ENCODE measurements at regions of chr7 and their contacts with region 1.

Region 1: GRCh38 chr7:15561835-15562234 is at the start of gene AGMO:
- DNase-seq: peak; percentile 87
- H3K4me3 Mint-ChIP-seq: peak within 1 kb of the TSS; percentile 69
- H3K27ac Mint-ChIP-seq: peak within 1 kb of the TSS; percentile 55
- H3K4me1 Mint-ChIP-seq: peaks cover 38% of the 10 kb centered on the region
- H3K27me3 Mint-ChIP-seq: no peaks in the 10 kb centered on the region
- CTCF ChIP-seq: no peak
- total RNA-seq, gene AGMO: 13.2 and 13.9 TPM in 2 replicates

Region 2: GRCh38 chr7:15352421-15353206 is 209.2 kb before region 1 on chr7:
- CTCF ChIA-PET with region 1: interaction called, 10 read pairs
- intact Hi-C with region 1: no loop called
- DNase-seq: no peak
- H3K4me3 Mint-ChIP-seq: no peak overlapping the region
- H3K27ac Mint-ChIP-seq: no peak overlapping the region
- H3K4me1 Mint-ChIP-seq: no peaks in the 10 kb centered on the region
- H3K27me3 Mint-ChIP-seq: no peaks in the 10 kb centered on the region
- CTCF ChIP-seq: no peak

Region 3: GRCh38 chr7:15607529-15608210 is 45.8 kb after region 1 on chr7:
- CTCF ChIA-PET with region 1: interaction called, 5 read pairs
- intact Hi-C with region 1: loop called (anchors 5 kb)
- DNase-seq: no peak
- H3K4me3 Mint-ChIP-seq: no peak overlapping the region
- H3K27ac Mint-ChIP-seq: no peak overlapping the region
- H3K4me1 Mint-ChIP-seq: no peaks in the 10 kb centered on the region
- H3K27me3 Mint-ChIP-seq: no peaks in the 10 kb centered on the region
- CTCF ChIP-seq: no peak

Region 4: GRCh38 chr7:15680446-15680845 is 118.6 kb after region 1 on chr7:
- CTCF ChIA-PET with region 1: interaction called, 32 read pairs
- intact Hi-C with region 1: loop called (anchors 2 kb)
- DNase-seq: no peak
- H3K4me3 Mint-ChIP-seq: peak overlapping the region; percentile 47
- H3K27ac Mint-ChIP-seq: peak overlapping the region; percentile 75
- H3K4me1 Mint-ChIP-seq: peaks cover 10% of the 10 kb centered on the region
- H3K27me3 Mint-ChIP-seq: peaks cover 12% of the 10 kb centered on the region
- CTCF ChIP-seq: no peak

Region 5: GRCh38 chr7:15839416-15840100 is 277.7 kb after region 1 on chr7:
- CTCF ChIA-PET with region 1: no interaction called
- intact Hi-C with region 1: no loop called
- DNase-seq: no peak
- H3K4me3 Mint-ChIP-seq: no peak overlapping the region
- H3K27ac Mint-ChIP-seq: no peak overlapping the region
- H3K4me1 Mint-ChIP-seq: no peaks in the 10 kb centered on the region
- H3K27me3 Mint-ChIP-seq: no peaks in the 10 kb centered on the region
- CTCF ChIP-seq: no peak

Region 6: GRCh38 chr7:15874774-15875173 is 312.9 kb after region 1 on chr7:
- CTCF ChIA-PET with region 1: no interaction called
- intact Hi-C with region 1: no loop called
- DNase-seq: no peak
- H3K4me3 Mint-ChIP-seq: no peak overlapping the region
- H3K27ac Mint-ChIP-seq: no peak overlapping the region
- H3K4me1 Mint-ChIP-seq: no peaks in the 10 kb centered on the region
- H3K27me3 Mint-ChIP-seq: no peaks in the 10 kb centered on the region
- CTCF ChIP-seq: no peak

Measured in Calu3 (cell line).